GM10248 (cell line): ENCODE measurements at regions of chr4 and their contacts with region 1.

Region 1: DNA sequence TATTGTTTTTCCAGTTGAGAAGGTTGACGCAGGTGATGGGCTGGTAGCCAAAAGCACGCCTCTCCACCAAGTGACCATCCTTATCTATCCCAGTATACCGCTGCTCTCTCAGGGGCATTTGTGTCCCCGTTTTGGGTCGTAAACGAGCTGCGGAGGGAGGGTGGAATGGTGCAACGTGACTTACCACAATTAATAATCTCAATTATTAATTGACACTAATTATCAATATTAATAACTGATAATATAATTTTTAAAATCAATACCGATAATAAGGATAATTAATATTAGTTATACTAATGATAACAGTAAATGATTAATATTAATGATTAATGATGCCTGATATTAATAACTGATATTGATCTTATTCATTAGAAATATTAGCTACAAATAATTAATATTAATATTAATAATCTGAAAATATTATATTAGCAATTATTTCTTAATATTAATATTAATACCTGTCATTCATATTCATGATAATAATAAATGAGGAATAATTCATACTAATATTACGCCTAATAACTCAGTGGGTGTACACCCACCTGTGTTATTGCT is 56.1 kb downstream of the OTOP1 start:
- DNase-seq: no peak
- CTCF ChIP-seq: no peak

Region 2: GRCh38 chr4:4182835-4183568 is 12.3 kb after region 1 on chr4:
- CTCF ChIA-PET with region 1: interaction called, 15 read pairs
- POLR2A ChIA-PET with region 1: no interaction called
- DNase-seq: peak; percentile 31
- CTCF ChIP-seq: peak; percentile 72

Region 3: GRCh38 chr4:4418676-4419390 is 248.2 kb after region 1 on chr4:
- CTCF ChIA-PET with region 1: no interaction called
- POLR2A ChIA-PET with region 1: no interaction called
- DNase-seq: no peak
- CTCF ChIP-seq: no peak

Region 4: DNA sequence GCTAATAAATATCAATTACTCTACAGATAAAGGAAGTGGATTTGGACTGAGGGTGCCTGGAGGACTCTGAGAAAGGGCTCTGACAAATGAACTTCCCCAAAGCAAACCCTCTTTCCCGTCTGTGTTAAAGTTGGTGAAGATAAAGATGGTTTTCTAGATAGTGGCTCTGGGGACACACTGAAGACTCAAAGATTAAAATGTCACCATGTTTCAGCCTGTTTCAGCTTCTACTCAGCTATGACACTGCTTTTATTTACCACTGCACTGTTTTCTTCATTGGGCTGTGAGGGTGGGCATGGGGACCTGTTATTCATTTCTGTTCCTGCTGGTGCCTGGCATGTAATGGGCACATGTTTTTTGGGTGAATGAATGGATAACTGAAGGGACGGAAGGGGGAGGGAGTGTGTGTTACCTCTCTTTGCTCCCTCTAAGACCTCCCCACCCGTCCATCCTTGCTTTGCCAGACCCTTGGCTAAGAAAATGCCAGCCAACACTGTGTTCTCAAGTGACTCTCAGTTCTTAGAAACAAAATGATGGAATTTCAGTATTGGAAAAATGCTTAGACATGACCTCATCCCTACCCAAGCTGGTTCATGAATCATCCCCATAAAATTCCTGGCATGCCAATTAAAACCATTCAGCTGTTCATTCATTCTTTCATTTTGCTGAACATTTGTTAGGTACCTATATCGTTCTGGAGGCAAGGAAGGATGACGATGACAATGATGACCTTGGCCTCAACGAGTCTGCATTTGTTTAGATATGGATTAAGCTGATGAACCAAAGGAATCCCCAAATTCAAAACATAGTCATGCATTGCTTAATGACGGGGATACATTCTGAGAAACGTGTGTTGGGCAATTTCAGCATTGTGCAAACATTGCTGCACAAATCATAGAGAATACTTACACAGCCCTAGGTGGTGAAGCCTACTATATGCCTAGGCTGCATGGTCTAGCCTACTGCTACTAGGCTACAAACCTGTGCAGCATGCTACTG is 867.2 kb after region 1 on chr4:
- CTCF ChIA-PET with region 1: no interaction called
- POLR2A ChIA-PET with region 1: no interaction called
- DNase-seq: no peak
- CTCF ChIP-seq: no peak